Activated T-helper 2 cell treated with anti-CD3 and anti-CD28 coated beads, Interferon-gamma antibody, Interleukin-2, Interleukin-4, amounts not matched to agents 10 μg/mL and 5 μg/mL and 100 μg/mL, durations not matched to agents 14 hours and 24 hours and 36 hours (primary cell): ENCODE measurements at regions of chr5 and their contacts with region 1.

Region 1: GRCh38 chr5:82641331-82642003 is 363.3 kb upstream of the RPS23 start:
- DNase-seq: no peak
- H3K4me3 Mint-ChIP-seq: no peak overlapping the region
- H3K27ac Mint-ChIP-seq: no peak overlapping the region
- H3K4me1 Mint-ChIP-seq: peaks cover 8% of the 10 kb centered on the region
- H3K27me3 Mint-ChIP-seq: peaks cover 3% of the 10 kb centered on the region

Region 2: GRCh38 chr5:82664732-82665131 is 23.3 kb after region 1 on chr5:
- intact Hi-C with region 1: no loop called
- DNase-seq: no peak
- H3K4me3 Mint-ChIP-seq: no peak overlapping the region
- H3K27ac Mint-ChIP-seq: no peak overlapping the region
- H3K4me1 Mint-ChIP-seq: peaks cover 6% of the 10 kb centered on the region
- H3K27me3 Mint-ChIP-seq: peaks cover 3% of the 10 kb centered on the region

Region 3: GRCh38 chr5:82793808-82794419 is 152.4 kb after region 1 on chr5:
- intact Hi-C with region 1: loop called (anchors 1 kb)
- DNase-seq: no peak
- H3K4me3 Mint-ChIP-seq: no peak overlapping the region
- H3K27ac Mint-ChIP-seq: no peak overlapping the region
- H3K4me1 Mint-ChIP-seq: no peaks in the 10 kb centered on the region
- H3K27me3 Mint-ChIP-seq: peaks cover 5% of the 10 kb centered on the region

Region 4: GRCh38 chr5:83564069-83564749 is 922.7 kb after region 1 on chr5:
- intact Hi-C with region 1: loop called (anchors 5 kb)
- DNase-seq: no peak
- H3K4me3 Mint-ChIP-seq: no peak overlapping the region
- H3K27ac Mint-ChIP-seq: no peak overlapping the region
- H3K4me1 Mint-ChIP-seq: peaks cover 3% of the 10 kb centered on the region
- H3K27me3 Mint-ChIP-seq: peaks cover 18% of the 10 kb centered on the region